ENCODE measurements at regions of chr3 and their contacts with region 1.

Region 1: GRCh38 chr3:170012683-170013384 is 25.0 kb upstream of the GPR160 start:
- DNase-seq: no peak
- H3K4me3 ChIP-seq: no peak overlapping the region
- H3K27ac ChIP-seq: no peak overlapping the region
- H3K4me1 ChIP-seq: no peaks in the 10 kb centered on the region
- H3K27me3 ChIP-seq: no peaks in the 10 kb centered on the region
- CTCF ChIP-seq: no peak
- POLR2A ChIP-seq: no peak

Region 2: DNA sequence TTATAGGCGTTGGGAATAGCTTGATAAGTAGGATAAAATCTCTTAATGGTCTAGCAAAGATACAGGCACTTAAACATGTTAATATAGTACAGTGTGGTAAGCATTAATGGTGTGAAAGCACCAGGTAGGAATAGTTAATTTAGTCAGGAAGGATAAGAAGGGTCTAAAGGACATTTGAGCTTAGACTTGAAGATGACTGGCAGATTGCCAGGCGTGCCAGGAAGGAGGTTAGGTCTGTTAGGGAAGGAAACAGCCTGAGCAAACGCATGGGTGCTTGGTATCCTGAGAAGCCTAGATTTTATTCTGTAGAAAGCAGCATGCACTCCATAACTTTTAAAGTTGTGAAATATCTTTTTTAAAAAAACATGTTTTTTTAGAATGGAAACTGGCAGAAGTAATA is 28.5 kb before region 1 on chr3:
- intact Hi-C with region 1: loop called (anchors 2 kb)
- DNase-seq: no peak
- H3K4me3 ChIP-seq: no peak overlapping the region
- H3K27ac ChIP-seq: no peak overlapping the region
- H3K4me1 ChIP-seq: no peaks in the 10 kb centered on the region
- H3K27me3 ChIP-seq: no peaks in the 10 kb centered on the region
- CTCF ChIP-seq: no peak
- POLR2A ChIP-seq: no peak

Region 3: GRCh38 chr3:170914690-170915089 is 901.9 kb after region 1 on chr3:
- intact Hi-C with region 1: no loop called
- DNase-seq: no peak
- H3K4me3 ChIP-seq: no peak overlapping the region
- H3K27ac ChIP-seq: no peak overlapping the region
- H3K4me1 ChIP-seq: no peaks in the 10 kb centered on the region
- H3K27me3 ChIP-seq: no peaks in the 10 kb centered on the region
- CTCF ChIP-seq: no peak
- POLR2A ChIP-seq: no peak